Naive thymus-derived CD4-positive, alpha-beta T cell (primary cell): ENCODE measurements at regions of chr1 and their contacts with region 1.

Region 1: DNA sequence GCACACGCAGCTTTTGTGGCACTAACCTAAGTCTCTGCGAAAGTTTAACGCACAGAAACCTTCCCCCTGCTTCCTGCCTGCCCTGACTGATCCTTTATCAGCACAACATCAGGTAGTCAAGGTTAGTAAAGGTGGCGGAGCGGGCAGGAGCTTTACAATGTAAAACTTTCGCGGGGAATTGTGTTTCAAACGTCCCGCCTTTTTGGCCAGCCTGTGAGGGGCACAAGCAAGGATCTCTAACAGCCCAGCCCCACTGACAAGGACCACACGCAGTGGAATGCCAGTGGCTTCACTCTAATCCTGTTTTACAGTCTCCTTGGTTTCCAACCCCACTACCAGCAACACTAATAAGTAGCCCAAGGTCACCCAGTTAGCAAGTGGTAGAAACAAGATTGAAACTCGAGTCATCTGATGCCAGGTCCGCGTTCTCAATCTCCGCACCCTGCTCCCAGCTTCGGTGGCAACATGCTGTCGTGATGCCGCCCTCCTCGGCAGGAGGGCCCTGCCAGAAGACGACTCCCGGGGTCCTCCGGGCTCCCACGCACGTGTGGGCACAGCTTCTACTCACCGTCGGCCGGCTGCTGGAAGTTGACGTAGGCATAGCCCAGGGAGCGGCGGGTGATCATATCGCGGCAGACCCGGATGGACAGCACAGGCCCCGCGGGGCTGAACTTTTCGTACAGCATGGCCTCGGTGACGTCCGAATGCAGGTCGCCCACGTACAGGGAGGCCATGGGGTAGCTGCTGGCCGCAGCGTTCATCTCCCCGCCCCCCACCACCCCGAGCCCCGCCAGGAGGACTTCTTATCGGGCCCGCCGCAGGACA is 1.2 kb downstream of the PABPC4 start:
- DNase-seq: peak; percentile 25 to 72 (median 57)
- ATAC-seq: peak; percentile 45
- H3K4me3 ChIP-seq: peak overlapping the region; percentile 68
- H3K4me3 Mint-ChIP-seq: peak overlapping the region; percentile 86 to 98 (median 91)
- H3K27ac ChIP-seq: peak overlapping the region; percentile 89
- H3K27ac Mint-ChIP-seq: peak overlapping the region; percentile 79 to 96 (median 93)
- H3K4me1 ChIP-seq: peaks cover 18 to 26% of the 10 kb centered on the region in 2 donors
- H3K4me1 Mint-ChIP-seq: peaks cover 19 to 52% (median 49%) of the 10 kb centered on the region in 7 donors
- H3K27me3 ChIP-seq: no peaks in the 10 kb centered on the region
- H3K27me3 Mint-ChIP-seq: no peaks in the 10 kb centered on the region

Region 2: GRCh38 chr1:39098546-39099250 is 476.7 kb before region 1 on chr1:
- CTCF ChIA-PET with region 1: no interaction called
- POLR2A ChIA-PET with region 1: no interaction called
- intact Hi-C with region 1: loop called in 1 of 2 experiments (anchors 1 kb)
- DNase-seq: peak in 8 of 9 donors; percentile 42 to 75 (median 69)
- ATAC-seq: peak; percentile 89
- H3K4me3 ChIP-seq: no peak overlapping the region
- H3K4me3 Mint-ChIP-seq: no peak overlapping the region
- H3K27ac ChIP-seq: no peak overlapping the region
- H3K27ac Mint-ChIP-seq: peak overlapping the region in 5 of 9 donors; percentile 5 to 65 (median 9)
- H3K4me1 ChIP-seq: peaks cover 3 to 10% of the 10 kb centered on the region in 2 donors
- H3K4me1 Mint-ChIP-seq: peaks cover 22 to 24% (median 23%) of the 10 kb centered on the region in 7 donors
- H3K27me3 ChIP-seq: no peaks in the 10 kb centered on the region
- H3K27me3 Mint-ChIP-seq: peaks cover 0 to 3% (median 0%) of the 10 kb centered on the region in 5 donors

Region 3: GRCh38 chr1:39491146-39491921 is 84.1 kb before region 1 on chr1 and contains the start of gene BMP8A:
- CTCF ChIA-PET with region 1: no interaction called
- POLR2A ChIA-PET with region 1: interaction called, 3 read pairs
- intact Hi-C with region 1: loop called in 1 of 2 experiments (anchors 2 kb)
- DNase-seq: peak; percentile 56 to 81 (median 71)
- ATAC-seq: peak; percentile 94
- H3K4me3 ChIP-seq: peak within 1 kb of the TSS; percentile 39
- H3K4me3 Mint-ChIP-seq: peak within 1 kb of the TSS; percentile 61 to 84 (median 70)
- H3K27ac ChIP-seq: no peak within 1 kb of the TSS
- H3K27ac Mint-ChIP-seq: peak within 1 kb of the TSS in 4 of 9 donors; percentile 23 to 62 (median 40)
- H3K4me1 ChIP-seq: no peaks in the 10 kb centered on the region
- H3K4me1 Mint-ChIP-seq: peaks cover 0 to 6% (median 3%) of the 10 kb centered on the region in 7 donors
- H3K27me3 ChIP-seq: no peaks in the 10 kb centered on the region
- H3K27me3 Mint-ChIP-seq: peaks cover 15 to 36% (median 20%) of the 10 kb centered on the region in 5 donors
- total RNA-seq, gene BMP8A: 0.19 TPM in 1 of 5 experiments, not detected in the others

Region 4: DNA sequence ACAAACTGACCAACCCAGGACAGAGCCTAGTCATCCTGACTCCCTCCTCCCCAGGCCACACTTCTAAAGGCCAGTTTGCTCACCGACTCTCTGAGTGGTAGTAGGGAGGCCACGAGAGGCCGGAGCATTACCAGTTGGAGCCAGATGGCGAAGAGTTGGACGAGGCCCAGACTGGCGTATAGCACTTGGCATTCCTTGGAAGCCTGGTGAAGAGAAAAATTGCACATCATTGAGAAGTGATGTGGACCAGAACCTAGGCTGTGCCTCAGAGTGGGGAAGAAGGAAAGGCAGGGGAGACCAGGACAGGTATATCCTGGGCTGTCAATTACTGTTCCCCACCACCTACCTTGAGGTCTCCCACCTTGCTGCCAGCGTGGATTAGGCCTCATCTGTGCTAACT is 11.1 kb before region 1 on chr1:
- CTCF ChIA-PET with region 1: interaction called, 5 read pairs
- POLR2A ChIA-PET with region 1: interaction called, 14 read pairs
- intact Hi-C with region 1: loop called (anchors 1 kb)
- DNase-seq: no peak
- ATAC-seq: no peak
- H3K4me3 ChIP-seq: no peak overlapping the region
- H3K4me3 Mint-ChIP-seq: no peak overlapping the region
- H3K27ac ChIP-seq: no peak overlapping the region
- H3K27ac Mint-ChIP-seq: no peak overlapping the region
- H3K4me1 ChIP-seq: peaks cover 0 to 8% of the 10 kb centered on the region in 2 donors
- H3K4me1 Mint-ChIP-seq: peaks cover 0 to 23% (median 12%) of the 10 kb centered on the region in 7 donors
- H3K27me3 ChIP-seq: no peaks in the 10 kb centered on the region
- H3K27me3 Mint-ChIP-seq: no peaks in the 10 kb centered on the region

Region 5: GRCh38 chr1:39691262-39692151 is 116.1 kb after region 1 on chr1 and contains the start of gene HPCAL4:
- CTCF ChIA-PET with region 1: no interaction called
- POLR2A ChIA-PET with region 1: interaction called, 4 read pairs
- intact Hi-C with region 1: loop called in 1 of 2 experiments (anchors 1 kb)
- DNase-seq: peak; percentile 79 to 93 (median 88)
- ATAC-seq: peak; percentile 93
- H3K4me3 ChIP-seq: peak within 1 kb of the TSS; percentile 89
- H3K4me3 Mint-ChIP-seq: peak within 1 kb of the TSS; percentile 71 to 90 (median 86)
- H3K27ac ChIP-seq: peak within 1 kb of the TSS; percentile 69
- H3K27ac Mint-ChIP-seq: peak within 1 kb of the TSS; percentile 60 to 93 (median 84)
- H3K4me1 ChIP-seq: peaks cover 21 to 36% of the 10 kb centered on the region in 2 donors
- H3K4me1 Mint-ChIP-seq: peaks cover 22 to 48% (median 28%) of the 10 kb centered on the region in 7 donors
- H3K27me3 ChIP-seq: no peaks in the 10 kb centered on the region
- H3K27me3 Mint-ChIP-seq: peaks cover 0 to 63% (median 13%) of the 10 kb centered on the region in 5 donors
- total RNA-seq, gene HPCAL4: 2.9 to 49.0 (median 18.7) TPM

Region 6: GRCh38 chr1:39738622-39739366 is 163.4 kb after region 1 on chr1 and contains the start of gene PPIE:
- CTCF ChIA-PET with region 1: no interaction called
- POLR2A ChIA-PET with region 1: interaction called, 5 read pairs
- intact Hi-C with region 1: loop called in 1 of 2 experiments (anchors 1 kb)
- DNase-seq: peak; percentile 71 to 88 (median 85)
- ATAC-seq: peak; percentile 99
- H3K4me3 ChIP-seq: peak within 1 kb of the TSS; percentile 88
- H3K4me3 Mint-ChIP-seq: peak within 1 kb of the TSS; percentile 86 to 98 (median 96)
- H3K27ac ChIP-seq: peak within 1 kb of the TSS; percentile 74
- H3K27ac Mint-ChIP-seq: peak within 1 kb of the TSS; percentile 92 to 97 (median 96)
- H3K4me1 ChIP-seq: peaks cover 16 to 17% of the 10 kb centered on the region in 2 donors
- H3K4me1 Mint-ChIP-seq: peaks cover 21 to 44% (median 38%) of the 10 kb centered on the region in 7 donors
- H3K27me3 ChIP-seq: no peaks in the 10 kb centered on the region
- H3K27me3 Mint-ChIP-seq: peaks cover 2 to 16% (median 11%) of the 10 kb centered on the region in 5 donors
- total RNA-seq, gene PPIE: 52.3 to 79.1 (median 61.3) TPM

Region 7: GRCh38 chr1:39886757-39887231 is 311.4 kb after region 1 on chr1:
- CTCF ChIA-PET with region 1: no interaction called
- POLR2A ChIA-PET with region 1: no interaction called
- intact Hi-C with region 1: loop called in 1 of 2 experiments (anchors 2 kb)
- DNase-seq: no peak
- ATAC-seq: no peak
- H3K4me3 ChIP-seq: no peak overlapping the region
- H3K4me3 Mint-ChIP-seq: no peak overlapping the region
- H3K27ac ChIP-seq: no peak overlapping the region
- H3K27ac Mint-ChIP-seq: no peak overlapping the region
- H3K4me1 ChIP-seq: peaks cover 9 to 11% of the 10 kb centered on the region in 2 donors
- H3K4me1 Mint-ChIP-seq: peaks cover 11 to 22% (median 15%) of the 10 kb centered on the region in 7 donors
- H3K27me3 ChIP-seq: no peaks in the 10 kb centered on the region
- H3K27me3 Mint-ChIP-seq: peaks cover under 1 to 12% (median 6%) of the 10 kb centered on the region in 5 donors